Esophagus muscularis mucosa (tissue), 4 donors: ENCODE measurements at regions of chr1 and their contacts with region 1.

Region 1: DNA sequence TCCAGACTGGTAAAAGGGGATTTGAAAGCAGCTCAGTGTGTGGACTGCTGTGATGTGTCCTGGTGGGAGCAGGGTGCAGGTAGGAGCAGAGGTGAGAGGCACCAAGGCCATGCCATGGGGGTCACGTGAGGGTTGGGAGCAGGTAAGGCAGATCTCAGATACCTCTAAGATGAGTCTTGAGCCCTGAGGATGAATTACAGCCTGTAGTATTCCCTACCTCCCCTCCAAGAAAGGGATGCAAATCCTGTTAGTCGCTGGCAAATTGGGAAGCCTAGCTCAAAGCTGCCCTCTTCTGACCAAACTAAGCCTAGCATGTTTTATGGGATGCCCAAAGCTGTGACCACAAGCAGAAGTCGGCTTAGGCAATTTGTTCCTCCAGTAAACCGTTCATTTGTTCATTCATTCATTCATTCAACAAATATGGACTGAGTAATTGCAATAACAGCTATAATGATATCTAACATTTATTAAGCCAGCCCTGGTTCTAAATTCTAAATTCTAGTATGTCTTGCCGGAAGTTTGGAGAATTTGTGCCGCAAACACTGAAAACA is 3.9 kb upstream of the NUAK2 start:
- DNase-seq: no peak
- H3K4me3 ChIP-seq: no peak overlapping the region
- H3K27ac ChIP-seq: no peak overlapping the region
- H3K4me1 ChIP-seq: peaks cover 7 to 15% (median 14%) of the 10 kb centered on the region in 4 donors
- H3K27me3 ChIP-seq: peaks cover 0 to 23% (median 0%) of the 10 kb centered on the region in 4 donors
- CTCF ChIP-seq: peak; percentile 68 to 87 (median 78)
- EP300 ChIP-seq: no peak
- POLR2A ChIP-seq: no peak

Region 2: DNA sequence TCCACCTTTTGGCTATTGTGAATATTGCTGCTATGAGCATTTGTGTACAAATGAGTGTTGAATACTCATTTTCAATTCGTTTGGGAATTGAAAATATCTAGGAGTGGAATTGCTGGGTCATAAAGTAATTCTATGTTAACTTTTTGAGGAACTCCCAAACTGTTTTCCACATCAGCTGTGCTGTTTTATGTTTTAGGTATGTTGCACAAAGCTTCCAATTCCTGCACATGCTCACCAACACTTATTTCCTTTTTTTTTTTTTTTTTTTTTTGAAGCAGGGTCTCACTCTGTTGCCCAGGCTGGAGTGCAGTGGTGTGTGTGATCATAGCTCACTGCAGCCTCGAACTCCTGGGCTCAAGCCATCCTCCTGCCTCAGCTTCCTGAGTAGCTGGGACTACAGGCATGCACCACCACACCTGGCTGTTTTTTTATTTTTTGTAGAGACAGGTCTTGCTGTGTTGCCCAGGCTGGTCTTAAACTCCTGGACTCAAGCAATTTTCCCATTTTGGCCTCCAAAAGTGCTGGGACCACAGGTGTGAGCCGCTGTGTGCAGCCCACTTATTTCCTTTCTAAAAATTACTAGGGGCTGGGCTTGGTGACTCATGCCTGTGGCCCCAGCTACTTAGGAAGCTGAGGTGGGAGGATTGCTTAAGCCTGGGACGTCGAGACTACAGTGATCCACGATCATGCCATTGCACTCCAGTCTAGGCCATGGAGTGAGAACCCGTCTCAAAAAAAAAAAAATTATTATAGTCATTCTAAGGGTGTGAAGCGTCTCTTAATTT is 64.3 kb before region 1 on chr1:
- intact Hi-C with region 1: no loop called
- DNase-seq: no peak
- H3K4me3 ChIP-seq: no peak overlapping the region
- H3K27ac ChIP-seq: no peak overlapping the region
- H3K4me1 ChIP-seq: peaks cover 28 to 51% (median 39%) of the 10 kb centered on the region in 4 donors
- H3K27me3 ChIP-seq: no peaks in the 10 kb centered on the region
- CTCF ChIP-seq: no peak
- EP300 ChIP-seq: no peak
- POLR2A ChIP-seq: no peak

Region 3: DNA sequence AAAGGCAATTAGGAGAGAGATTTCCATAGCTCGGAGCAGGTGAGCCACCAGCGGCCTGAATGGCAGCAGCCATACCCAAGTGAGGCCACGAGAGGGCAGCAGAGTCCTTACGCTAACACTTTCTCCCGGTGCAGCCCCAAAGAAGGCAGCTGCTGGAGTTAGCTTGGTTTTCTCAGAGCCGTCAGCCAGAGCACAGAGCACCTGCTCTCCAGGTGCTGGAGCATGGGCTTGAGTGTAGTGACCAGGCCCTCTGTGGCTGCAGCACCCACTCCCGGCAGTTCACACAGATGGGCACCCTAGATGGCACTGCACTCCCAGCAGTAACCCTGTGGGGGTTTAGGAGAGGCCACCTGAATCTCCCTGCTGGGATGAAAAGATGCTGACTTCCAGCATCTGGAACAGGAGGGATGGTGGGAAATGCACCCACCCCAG is 51.8 kb before region 1 on chr1:
- intact Hi-C with region 1: loop called (anchors 1 kb)
- DNase-seq: peak; percentile 95
- H3K4me3 ChIP-seq: no peak overlapping the region
- H3K27ac ChIP-seq: no peak overlapping the region
- H3K4me1 ChIP-seq: peaks cover 13 to 29% (median 23%) of the 10 kb centered on the region in 4 donors
- H3K27me3 ChIP-seq: no peaks in the 10 kb centered on the region
- CTCF ChIP-seq: peak in 2 of 3 experiments; percentile 98 to 99
- EP300 ChIP-seq: no peak
- POLR2A ChIP-seq: no peak